IMR-90 (cell line): ENCODE measurements at regions of chr22 and their contacts with region 1.

Region 1: GRCh38 chr22:37166675-37167066 is 17.0 kb upstream of the IL2RB start:
- DNase-seq: peak; percentile 65
- ATAC-seq: peak; percentile 96
- H3K4me3 ChIP-seq: no peak overlapping the region
- H3K27ac ChIP-seq: no peak overlapping the region
- H3K4me1 ChIP-seq: no peaks in the 10 kb centered on the region; the same call in 1 of the 2 replicates
- H3K27me3 ChIP-seq: peaks cover 22% of the 10 kb centered on the region
- CTCF ChIP-seq: peak; percentile 94
- POLR2A ChIP-seq: no peak
- RAD21 ChIP-seq: peak; percentile 83

Region 2: DNA sequence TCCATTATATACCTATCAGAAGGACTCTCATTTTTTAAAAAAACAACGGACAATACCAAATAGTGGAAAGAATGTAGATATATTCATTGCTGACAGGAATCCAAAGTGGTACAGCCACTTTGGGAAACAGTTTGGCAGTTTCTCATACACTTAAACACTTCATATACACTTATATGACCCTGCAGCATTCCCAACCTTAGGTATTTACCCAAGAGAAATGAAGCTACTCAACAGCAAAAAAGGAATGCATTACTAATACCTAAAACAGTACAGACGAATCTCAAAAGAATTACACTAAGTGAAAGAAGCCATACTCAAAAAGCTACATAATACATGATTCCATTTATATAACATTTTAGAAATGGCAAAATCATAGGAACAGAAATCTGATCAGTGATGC is 1189.5 kb before region 1 on chr22:
- CTCF ChIA-PET with region 1: no interaction called
- POLR2A ChIA-PET with region 1: no interaction called
- dilution Hi-C with region 1: no loop called
- in situ Hi-C with region 1: no loop called
- intact Hi-C with region 1: no loop called
- DNase-seq: peak; percentile 85
- ATAC-seq: peak; percentile 85
- H3K4me3 ChIP-seq: no peak overlapping the region
- H3K27ac ChIP-seq: peak overlapping the region; percentile 41
- H3K4me1 ChIP-seq: peaks cover 27% of the 10 kb centered on the region
- H3K27me3 ChIP-seq: no peaks in the 10 kb centered on the region
- CTCF ChIP-seq: no peak
- POLR2A ChIP-seq: no peak
- RAD21 ChIP-seq: no peak

Region 3: GRCh38 chr22:37260901-37261336 is 94.2 kb after region 1 on chr22:
- CTCF ChIA-PET with region 1: no interaction called
- POLR2A ChIA-PET with region 1: no interaction called
- dilution Hi-C with region 1: no loop called
- in situ Hi-C with region 1: no loop called
- intact Hi-C with region 1: loop called (anchors 1 kb)
- DNase-seq: peak; percentile 51
- ATAC-seq: peak; percentile 81
- H3K4me3 ChIP-seq: no peak overlapping the region
- H3K27ac ChIP-seq: no peak overlapping the region
- H3K4me1 ChIP-seq: peaks cover 2% of the 10 kb centered on the region
- H3K27me3 ChIP-seq: peaks cover 9% of the 10 kb centered on the region
- CTCF ChIP-seq: peak; percentile 79
- POLR2A ChIP-seq: no peak
- RAD21 ChIP-seq: peak; percentile 63